ENCODE measurements at regions of chr11 and their contacts with region 1.

Region 1: DNA sequence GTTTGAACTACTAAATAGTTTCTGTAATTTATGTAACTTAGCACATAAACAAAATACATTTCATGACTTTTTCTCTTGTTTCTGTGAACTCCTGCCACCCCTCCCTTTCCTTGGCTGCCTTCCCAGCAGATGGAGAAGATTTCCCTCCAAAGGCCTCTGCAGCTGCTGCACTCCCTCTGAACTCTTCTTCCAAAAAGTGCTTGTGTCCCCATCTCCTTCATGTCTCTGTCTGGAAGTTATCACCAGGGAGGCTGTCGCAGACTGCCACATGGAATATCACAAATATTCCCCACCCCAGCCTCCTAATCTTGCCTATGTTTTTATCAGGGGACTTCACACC is 1068.3 kb downstream of the OPCML start:
- DNase-seq: no peak
- ATAC-seq: no peak
- H3K4me3 ChIP-seq: no peak overlapping the region
- H3K4me3 Mint-ChIP-seq: no peak overlapping the region
- H3K27ac ChIP-seq: no peak overlapping the region
- H3K27ac Mint-ChIP-seq: no peak overlapping the region
- H3K4me1 ChIP-seq: no peaks in the 10 kb centered on the region
- H3K4me1 Mint-ChIP-seq: no peaks in the 10 kb centered on the region
- H3K27me3 ChIP-seq: no peaks in the 10 kb centered on the region
- H3K27me3 Mint-ChIP-seq: no peaks in the 10 kb centered on the region
- CTCF ChIP-seq: no peak

Region 2: DNA sequence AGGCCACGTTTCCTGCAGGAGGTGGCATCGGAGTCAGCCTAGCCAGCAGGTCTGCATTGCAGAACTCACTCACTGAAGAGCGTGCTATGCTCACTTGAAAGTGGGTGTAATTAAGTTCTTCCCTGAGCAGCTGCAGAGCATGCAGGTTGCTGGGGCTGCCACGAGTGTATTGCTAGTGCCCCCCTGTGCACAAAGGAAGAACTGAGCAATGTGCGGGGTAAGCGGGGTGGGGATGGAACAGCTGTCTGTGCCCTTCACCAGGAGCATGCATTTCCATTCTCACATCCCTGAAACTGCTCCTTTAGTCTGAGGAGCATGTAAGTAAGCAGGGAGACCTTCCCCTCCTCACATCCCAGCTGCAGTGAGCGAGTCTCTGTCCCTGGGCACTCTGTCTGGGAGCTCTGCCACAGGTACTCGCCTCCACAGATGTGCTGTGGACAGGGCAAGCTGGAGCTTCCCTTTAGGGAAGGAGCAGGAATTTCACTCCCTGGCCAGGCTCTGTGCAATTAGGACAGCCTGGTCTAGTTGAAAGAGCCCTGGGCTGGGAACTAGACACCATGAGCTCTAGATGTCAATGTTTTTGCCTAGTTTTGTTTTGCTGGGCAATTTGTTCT is 61.8 kb before region 1 on chr11:
- CTCF ChIA-PET with region 1: no interaction called
- POLR2A ChIA-PET with region 1: no interaction called
- intact Hi-C with region 1: no loop called
- DNase-seq: no peak
- ATAC-seq: no peak
- H3K4me3 ChIP-seq: no peak overlapping the region
- H3K4me3 Mint-ChIP-seq: no peak overlapping the region
- H3K27ac ChIP-seq: no peak overlapping the region
- H3K27ac Mint-ChIP-seq: no peak overlapping the region
- H3K4me1 ChIP-seq: no peaks in the 10 kb centered on the region
- H3K4me1 Mint-ChIP-seq: no peaks in the 10 kb centered on the region
- H3K27me3 ChIP-seq: no peaks in the 10 kb centered on the region
- H3K27me3 Mint-ChIP-seq: no peaks in the 10 kb centered on the region
- CTCF ChIP-seq: no peak

Region 3: DNA sequence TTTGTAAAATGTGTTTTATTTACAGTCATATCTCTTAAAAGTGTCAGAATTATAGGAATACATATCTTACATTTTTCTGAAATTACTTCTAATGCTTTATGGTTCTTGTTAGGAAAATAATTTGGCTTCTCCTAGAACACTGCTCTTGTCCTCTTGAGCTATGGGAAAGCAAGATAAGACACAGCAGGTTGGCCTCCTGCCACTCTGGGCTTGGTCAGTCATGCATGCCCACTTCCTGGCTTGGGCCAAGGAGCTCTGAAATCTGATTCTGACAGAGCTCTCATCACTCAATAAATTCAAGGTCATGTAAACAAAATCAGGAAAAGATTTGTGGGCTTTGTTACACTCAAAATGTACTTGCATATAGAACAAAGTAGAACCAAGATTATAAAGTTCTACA is 32.4 kb after region 1 on chr11:
- CTCF ChIA-PET with region 1: no interaction called
- POLR2A ChIA-PET with region 1: no interaction called
- intact Hi-C with region 1: no loop called
- DNase-seq: no peak
- ATAC-seq: no peak
- H3K4me3 ChIP-seq: no peak overlapping the region
- H3K4me3 Mint-ChIP-seq: no peak overlapping the region
- H3K27ac ChIP-seq: no peak overlapping the region
- H3K27ac Mint-ChIP-seq: no peak overlapping the region
- H3K4me1 ChIP-seq: no peaks in the 10 kb centered on the region
- H3K4me1 Mint-ChIP-seq: no peaks in the 10 kb centered on the region
- H3K27me3 ChIP-seq: no peaks in the 10 kb centered on the region
- H3K27me3 Mint-ChIP-seq: no peaks in the 10 kb centered on the region
- CTCF ChIP-seq: no peak

Region 4: DNA sequence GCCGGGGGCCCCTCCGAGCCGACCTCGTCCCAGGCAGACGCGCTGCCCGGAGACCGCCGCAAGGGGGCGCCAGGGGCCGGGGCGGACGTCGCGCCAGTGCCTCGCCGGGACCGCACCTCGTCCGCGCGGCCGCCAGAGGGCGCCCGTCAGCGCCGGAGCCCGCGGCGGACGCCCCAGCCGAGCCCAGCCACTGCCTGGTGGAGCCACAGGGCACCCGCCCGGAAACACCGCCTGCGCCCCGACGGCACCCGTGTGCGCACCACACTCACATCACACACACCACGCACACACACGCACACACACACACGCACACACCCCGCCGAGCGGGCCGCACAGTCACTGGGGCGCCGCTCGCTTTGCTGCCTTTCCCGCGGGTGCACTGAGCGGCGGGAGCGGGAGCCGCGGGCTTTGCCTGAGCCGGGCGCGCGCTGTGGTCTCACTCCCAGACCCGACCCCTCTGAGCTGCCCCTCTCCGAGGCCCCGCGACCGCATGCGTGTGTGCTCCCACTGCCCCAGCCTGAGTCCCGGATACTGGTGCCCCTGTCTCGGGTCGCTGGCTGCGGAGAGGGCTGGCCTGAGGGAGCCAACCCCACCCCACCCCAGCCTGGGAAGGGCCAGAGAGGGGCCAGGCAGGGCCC is 619.0 kb after region 1 on chr11:
- CTCF ChIA-PET with region 1: no interaction called
- POLR2A ChIA-PET with region 1: no interaction called
- intact Hi-C with region 1: loop called (anchors 10 kb)
- DNase-seq: peak; percentile 21
- ATAC-seq: peak; percentile 39
- H3K4me3 ChIP-seq: no peak overlapping the region
- H3K4me3 Mint-ChIP-seq: no peak overlapping the region
- H3K27ac ChIP-seq: no peak overlapping the region
- H3K27ac Mint-ChIP-seq: no peak overlapping the region
- H3K4me1 ChIP-seq: peaks cover 0 to 5% of the 10 kb centered on the region in 2 donors
- H3K4me1 Mint-ChIP-seq: no peaks in the 10 kb centered on the region
- H3K27me3 ChIP-seq: peaks cover 0 to 16% (median 9%) of the 10 kb centered on the region in 4 experiments
- H3K27me3 Mint-ChIP-seq: peaks cover 37% of the 10 kb centered on the region
- CTCF ChIP-seq: peak; percentile 22

Measured in B cell (primary cell).